Common myeloid progenitor, CD34-positive (primary cell): ENCODE measurements at regions of chr3 and their contacts with region 1.

Region 1: DNA sequence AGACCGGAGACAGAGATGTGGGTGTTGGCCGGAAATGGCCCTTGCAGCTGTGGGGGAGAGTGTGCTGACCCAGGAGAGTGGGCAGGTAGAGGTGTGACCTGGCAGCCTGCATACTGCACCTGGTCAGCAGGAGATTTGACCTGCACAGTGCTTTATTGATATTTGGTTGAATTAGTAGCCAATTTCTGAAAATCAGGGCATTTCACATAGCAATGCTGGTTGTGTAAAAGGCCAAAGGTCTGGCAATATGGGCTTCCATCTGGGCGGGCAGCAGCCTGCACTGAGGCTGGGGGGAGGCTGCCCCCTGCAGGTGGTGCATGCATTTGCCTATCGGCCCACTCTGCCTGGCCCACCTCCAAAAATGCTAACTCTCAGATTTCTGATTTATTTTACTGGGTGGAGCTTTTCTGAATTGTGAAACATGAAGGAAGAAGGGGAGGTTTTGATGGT is 9.4 kb upstream of the MGLL start:
- DNase-seq: peak; percentile 67 to 86 (median 81)
- H3K4me3 ChIP-seq: no peak overlapping the region
- H3K27ac ChIP-seq: no peak overlapping the region
- H3K4me1 ChIP-seq: peaks cover 5 to 15% (median 8%) of the 10 kb centered on the region in 4 experiments
- H3K27me3 ChIP-seq: no peaks in the 10 kb centered on the region

Region 2: DNA sequence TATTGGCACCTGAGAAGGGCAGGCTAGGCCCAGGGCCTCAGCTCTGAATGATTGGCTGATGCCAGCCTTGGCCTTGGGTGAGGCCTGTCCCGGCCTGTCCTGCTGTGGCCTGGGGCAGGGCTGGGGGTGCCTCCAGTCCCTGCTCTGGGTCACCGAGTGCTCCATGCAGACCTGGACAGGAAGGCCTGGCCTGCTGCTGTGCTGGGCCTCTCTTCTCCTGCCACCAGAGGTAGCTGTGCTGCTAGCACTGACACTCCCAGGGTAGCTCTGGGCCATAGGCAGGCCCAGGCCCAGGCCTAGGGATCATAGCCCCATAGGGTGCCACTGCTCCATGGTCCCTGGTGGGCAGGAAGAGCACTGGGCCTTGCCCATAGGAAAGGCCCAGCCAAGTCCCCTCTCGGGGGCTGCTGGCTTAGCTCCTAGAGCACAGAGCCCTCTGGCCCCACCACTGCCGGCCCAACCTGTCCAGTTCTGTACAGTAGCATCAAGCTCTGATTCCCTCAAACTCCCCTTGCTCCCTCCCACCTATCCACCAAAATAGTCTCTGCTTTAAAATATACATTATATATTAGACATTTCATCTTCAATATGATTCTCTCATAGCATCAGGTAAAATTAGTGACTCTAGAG is 140.8 kb before region 1 on chr3:
- CTCF ChIA-PET with region 1: interaction called, 43 read pairs
- POLR2A ChIA-PET with region 1: no interaction called
- DNase-seq: peak in 2 of 3 donors; percentile 33 to 40
- H3K4me3 ChIP-seq: no peak overlapping the region
- H3K27ac ChIP-seq: no peak overlapping the region
- H3K4me1 ChIP-seq: peaks cover 0 to 2% (median 0%) of the 10 kb centered on the region in 4 experiments
- H3K27me3 ChIP-seq: no peaks in the 10 kb centered on the region

Region 3: GRCh38 chr3:127697551-127698240 is 134.1 kb before region 1 on chr3:
- CTCF ChIA-PET with region 1: interaction called, 43 read pairs
- POLR2A ChIA-PET with region 1: no interaction called
- DNase-seq: peak; percentile 55 to 74 (median 73)
- H3K4me3 ChIP-seq: no peak overlapping the region
- H3K27ac ChIP-seq: no peak overlapping the region
- H3K4me1 ChIP-seq: peaks cover 0 to 29% (median 20%) of the 10 kb centered on the region in 4 experiments
- H3K27me3 ChIP-seq: no peaks in the 10 kb centered on the region

Region 4: GRCh38 chr3:127750226-127751031 is 81.3 kb before region 1 on chr3:
- CTCF ChIA-PET with region 1: interaction called, 11 read pairs
- POLR2A ChIA-PET with region 1: no interaction called
- DNase-seq: peak in 2 of 3 donors; percentile 89 to 91
- H3K4me3 ChIP-seq: peak overlapping the region in 1 of 7 experiments; percentile 1
- H3K27ac ChIP-seq: no peak overlapping the region
- H3K4me1 ChIP-seq: peaks cover 0 to 56% (median 50%) of the 10 kb centered on the region in 4 experiments
- H3K27me3 ChIP-seq: no peaks in the 10 kb centered on the region

Region 5: GRCh38 chr3:128011140-128011539 is 179.4 kb after region 1 on chr3:
- CTCF ChIA-PET with region 1: no interaction called
- POLR2A ChIA-PET with region 1: no interaction called
- DNase-seq: peak in 2 of 3 donors; percentile 6 to 10
- H3K4me3 ChIP-seq: peak overlapping the region in 2 of 7 experiments; percentile 10 to 24
- H3K27ac ChIP-seq: no peak overlapping the region
- H3K4me1 ChIP-seq: peaks cover 0 to 5% (median 2%) of the 10 kb centered on the region in 4 experiments
- H3K27me3 ChIP-seq: peaks cover 0 to 13% (median 0%) of the 10 kb centered on the region in 5 experiments